IMR-90 (cell line): ENCODE measurements at regions of chr1 and their contacts with region 1.

Region 1: GRCh38 chr1:3630161-3630611 is 5.4 kb downstream of the TPRG1L start:
- DNase-seq: no peak
- ATAC-seq: no peak
- H3K4me3 ChIP-seq: no peak overlapping the region
- H3K27ac ChIP-seq: no peak overlapping the region
- H3K4me1 ChIP-seq: peaks cover 2% of the 10 kb centered on the region; the same call in 1 of the 2 replicates
- H3K27me3 ChIP-seq: no peaks in the 10 kb centered on the region
- CTCF ChIP-seq: no peak
- POLR2A ChIP-seq: no peak
- RAD21 ChIP-seq: no peak

Region 2: DNA sequence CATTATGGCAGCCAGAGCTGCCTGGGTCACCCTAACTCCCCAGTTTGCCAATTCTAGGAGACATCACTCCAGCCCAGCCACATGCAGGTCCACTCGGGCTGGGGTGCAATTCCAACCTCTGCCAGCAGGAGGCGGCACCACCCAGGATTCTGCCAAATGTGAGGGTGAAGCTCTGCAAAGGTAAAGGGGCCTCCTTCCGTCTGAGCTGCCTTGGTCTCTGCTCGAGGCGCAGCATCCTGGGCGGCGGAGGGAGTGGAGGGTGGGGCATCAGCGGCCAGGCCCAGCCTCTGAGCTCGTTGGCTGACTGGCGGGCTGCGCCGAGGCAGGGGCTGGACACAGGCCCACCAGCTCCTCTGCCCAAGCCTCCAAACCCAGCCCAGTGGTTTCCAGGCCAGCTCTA is 111.9 kb before region 1 on chr1:
- CTCF ChIA-PET with region 1: no interaction called
- POLR2A ChIA-PET with region 1: interaction called, 10 read pairs
- dilution Hi-C with region 1: no loop called
- in situ Hi-C with region 1: no loop called
- intact Hi-C with region 1: no loop called
- DNase-seq: no peak
- ATAC-seq: no peak
- H3K4me3 ChIP-seq: no peak overlapping the region
- H3K27ac ChIP-seq: no peak overlapping the region
- H3K4me1 ChIP-seq: no peaks in the 10 kb centered on the region
- H3K27me3 ChIP-seq: no peaks in the 10 kb centered on the region
- CTCF ChIP-seq: peak; percentile 46
- POLR2A ChIP-seq: no peak
- RAD21 ChIP-seq: peak; percentile 41

Region 3: DNA sequence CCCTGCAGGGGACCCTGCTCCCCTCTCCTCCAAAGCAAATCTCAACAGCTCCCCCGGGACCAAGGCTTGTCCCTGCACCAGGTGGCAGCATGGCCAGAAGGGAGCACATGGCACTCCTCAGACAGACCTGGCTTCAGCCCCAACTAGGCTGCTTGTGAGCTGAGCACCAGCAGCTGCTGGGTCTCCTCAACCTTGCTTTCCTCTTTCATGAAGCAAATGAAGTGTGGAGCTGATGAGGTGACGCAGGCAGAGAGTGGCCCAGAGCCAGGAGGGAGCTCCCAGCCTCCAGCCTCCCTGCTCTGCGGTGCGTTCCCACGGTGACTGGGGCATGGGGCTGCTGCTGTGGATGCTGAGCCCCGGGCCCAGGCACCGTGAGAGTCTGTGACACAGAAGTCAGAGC is 52.9 kb before region 1 on chr1:
- CTCF ChIA-PET with region 1: no interaction called
- POLR2A ChIA-PET with region 1: no interaction called
- dilution Hi-C with region 1: no loop called
- in situ Hi-C with region 1: no loop called
- intact Hi-C with region 1: no loop called
- DNase-seq: peak; percentile 71
- ATAC-seq: peak; percentile 60
- H3K4me3 ChIP-seq: no peak overlapping the region
- H3K27ac ChIP-seq: no peak overlapping the region
- H3K4me1 ChIP-seq: peaks cover 2% of the 10 kb centered on the region; the same call in 1 of the 2 replicates
- H3K27me3 ChIP-seq: peaks cover 6% of the 10 kb centered on the region; the same call in 1 of the 2 replicates
- CTCF ChIP-seq: no peak
- POLR2A ChIP-seq: no peak
- RAD21 ChIP-seq: no peak

Region 4: DNA sequence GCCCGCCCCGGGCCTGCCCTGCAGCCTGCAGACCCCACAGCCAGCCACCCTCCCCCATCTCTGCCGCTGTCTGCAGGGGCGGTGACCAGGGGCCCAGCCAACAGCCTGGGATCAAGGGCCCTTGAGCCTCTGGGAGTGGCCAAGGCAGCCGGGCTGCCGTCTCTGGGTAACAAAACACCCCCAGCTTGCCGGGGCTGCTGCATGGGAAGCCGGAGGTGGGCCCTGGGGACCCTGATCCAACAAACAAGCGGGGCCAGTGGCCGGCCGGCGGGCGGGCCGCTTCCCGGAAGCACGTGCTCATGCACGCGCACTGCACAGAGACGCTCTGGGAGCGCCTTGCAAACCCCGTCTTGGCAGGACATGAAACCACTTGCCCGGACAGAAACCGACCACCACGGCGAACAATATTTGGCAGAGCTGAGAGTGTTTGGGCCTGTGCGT is 32.1 kb before region 1 on chr1:
- CTCF ChIA-PET with region 1: no interaction called
- POLR2A ChIA-PET with region 1: no interaction called
- dilution Hi-C with region 1: no loop called
- in situ Hi-C with region 1: no loop called
- intact Hi-C with region 1: no loop called
- DNase-seq: no peak
- ATAC-seq: no peak; the same call in 1 of the 2 replicates
- H3K4me3 ChIP-seq: no peak overlapping the region
- H3K27ac ChIP-seq: no peak overlapping the region
- H3K4me1 ChIP-seq: no peaks in the 10 kb centered on the region
- H3K27me3 ChIP-seq: peaks cover 11% of the 10 kb centered on the region
- CTCF ChIP-seq: no peak
- POLR2A ChIP-seq: no peak
- RAD21 ChIP-seq: no peak